ENCODE measurements at regions of chr21 and their contacts with region 1.

Region 1: DNA sequence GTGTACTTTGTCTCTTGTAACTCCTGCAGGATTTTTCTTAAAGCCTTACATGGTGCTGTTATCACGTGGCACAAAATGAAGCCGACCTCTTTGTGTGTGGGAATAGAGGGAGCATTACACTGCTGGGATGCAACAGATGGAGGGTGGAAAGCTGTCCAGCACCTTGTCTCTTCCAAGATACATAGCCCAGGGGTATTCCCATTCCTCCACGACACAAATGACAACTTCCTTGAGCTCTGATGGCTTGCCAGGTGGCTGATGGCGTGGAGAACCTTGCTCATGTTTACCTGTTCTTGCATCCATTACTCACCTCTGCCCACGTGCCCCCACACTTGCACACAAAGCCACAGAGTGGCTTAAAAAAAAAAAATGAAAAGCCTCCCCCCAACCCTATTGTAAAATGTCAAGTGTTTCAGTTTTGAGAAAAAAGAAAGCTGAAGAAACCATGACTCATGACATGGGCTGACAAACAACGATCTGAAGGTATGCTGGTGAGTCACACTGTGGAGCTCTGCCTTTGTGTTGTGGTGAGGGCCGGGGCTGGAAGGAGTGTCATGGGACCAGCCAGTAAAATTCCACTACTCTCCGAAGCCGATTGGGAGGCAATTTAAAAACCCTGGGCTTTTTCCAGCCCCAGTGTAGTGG is 32.0 kb upstream of the ATP5PO start:
- DNase-seq: peak; percentile 89
- H3K4me3 ChIP-seq: peak overlapping the region; percentile 49
- H3K27ac ChIP-seq: peak overlapping the region; percentile 89
- H3K27me3 ChIP-seq: no peaks in the 10 kb centered on the region
- CTCF ChIP-seq: no peak

Region 2: GRCh38 chr21:33825915-33826314 is 121.7 kb before region 1 on chr21:
- CTCF ChIA-PET with region 1: no interaction called
- POLR2A ChIA-PET with region 1: no interaction called
- DNase-seq: peak; percentile 24
- H3K4me3 ChIP-seq: no peak overlapping the region
- H3K27ac ChIP-seq: no peak overlapping the region
- H3K27me3 ChIP-seq: no peaks in the 10 kb centered on the region
- CTCF ChIP-seq: no peak

Region 3: GRCh38 chr21:33976082-33977016 is 28.8 kb after region 1 on chr21:
- CTCF ChIA-PET with region 1: interaction called, 9 read pairs
- POLR2A ChIA-PET with region 1: interaction called, 12 read pairs
- DNase-seq: peak; percentile 78
- H3K4me3 ChIP-seq: peak overlapping the region; percentile 21
- H3K27ac ChIP-seq: peak overlapping the region; percentile 96
- H3K27me3 ChIP-seq: no peaks in the 10 kb centered on the region
- CTCF ChIP-seq: no peak

Measured in AG04450 (cell line).